Activated T-helper 2 cell treated with anti-CD3 and anti-CD28 coated beads, Interferon-gamma antibody, Interleukin-2, Interleukin-4, amounts not matched to agents 10 μg/mL and 5 μg/mL and 100 μg/mL, durations not matched to agents 14 hours and 24 hours and 36 hours (primary cell): ENCODE measurements at regions of chr2 and their contacts with region 1.

Region 1: GRCh38 chr2:203535078-203535783 is at the start of gene RAPH1:
- DNase-seq: peak; percentile 50
- H3K4me3 Mint-ChIP-seq: peak within 1 kb of the TSS; percentile 87
- H3K27ac Mint-ChIP-seq: peak within 1 kb of the TSS; percentile 78
- H3K4me1 Mint-ChIP-seq: peaks cover 22% of the 10 kb centered on the region
- H3K27me3 Mint-ChIP-seq: peaks cover 57% of the 10 kb centered on the region
- total RNA-seq, gene RAPH1: 2.8 and 4.6 TPM in 2 replicates

Region 2: DNA sequence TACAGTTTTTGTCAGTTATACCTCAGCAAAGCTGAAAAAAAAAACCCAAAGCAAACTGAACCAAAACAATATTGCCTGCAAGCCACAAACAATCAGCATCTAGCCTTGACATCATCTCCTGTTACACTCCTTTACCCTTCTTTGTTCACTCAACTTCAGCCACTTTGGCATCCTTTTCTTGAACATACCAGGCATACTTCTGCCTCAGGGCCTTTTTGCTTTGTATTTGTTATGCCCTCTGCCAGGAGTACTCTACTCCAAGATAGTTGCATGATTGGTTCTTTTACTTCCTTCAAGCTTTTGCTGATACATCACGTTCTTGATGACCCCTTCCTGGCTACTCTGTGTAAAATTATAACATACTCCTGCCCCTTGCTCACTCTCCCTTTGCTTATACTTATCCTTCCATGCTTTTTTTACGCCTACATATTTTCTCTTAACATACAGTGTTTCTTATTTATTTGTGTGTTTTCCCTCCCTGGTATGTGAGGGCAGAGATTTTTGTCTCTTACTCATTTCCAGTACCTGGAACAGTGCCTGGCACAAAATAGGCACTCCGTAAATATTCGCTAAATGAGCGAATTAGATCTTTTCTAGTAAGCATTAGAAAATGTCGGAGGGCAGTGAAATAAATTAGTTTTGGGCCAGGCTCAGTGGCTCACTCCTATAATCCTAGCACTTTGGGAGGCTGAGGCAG is 194.3 kb before region 1 on chr2:
- intact Hi-C with region 1: no loop called
- DNase-seq: no peak
- H3K4me3 Mint-ChIP-seq: no peak overlapping the region
- H3K27ac Mint-ChIP-seq: no peak overlapping the region
- H3K4me1 Mint-ChIP-seq: peaks cover 2% of the 10 kb centered on the region
- H3K27me3 Mint-ChIP-seq: no peaks in the 10 kb centered on the region

Region 3: GRCh38 chr2:203492965-203493364 is 42.3 kb before region 1 on chr2:
- intact Hi-C with region 1: loop called (anchors 5 kb)
- DNase-seq: no peak
- H3K4me3 Mint-ChIP-seq: no peak overlapping the region
- H3K27ac Mint-ChIP-seq: no peak overlapping the region
- H3K4me1 Mint-ChIP-seq: peaks cover 17% of the 10 kb centered on the region
- H3K27me3 Mint-ChIP-seq: no peaks in the 10 kb centered on the region

Region 4: DNA sequence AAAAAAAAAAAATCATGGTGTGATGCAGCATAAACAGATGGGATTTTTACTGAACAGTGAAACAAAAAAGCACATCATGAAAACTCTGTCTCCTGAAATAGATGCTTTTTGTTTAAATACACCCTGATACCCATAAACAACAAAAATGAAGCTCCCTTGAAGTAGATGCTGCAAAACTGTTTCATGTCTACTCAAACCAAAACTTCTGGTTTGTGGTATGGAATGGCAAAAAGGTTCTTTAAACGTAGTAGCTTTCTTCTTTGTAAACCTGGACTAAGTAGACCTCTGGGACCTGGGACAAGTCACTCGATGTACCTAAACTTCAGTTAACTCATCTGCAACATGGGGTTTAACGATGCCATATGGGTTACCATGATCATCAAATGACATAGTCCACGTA is 64.3 kb after region 1 on chr2:
- intact Hi-C with region 1: loop called (anchors 1 kb)
- DNase-seq: no peak
- H3K4me3 Mint-ChIP-seq: no peak overlapping the region
- H3K27ac Mint-ChIP-seq: no peak overlapping the region
- H3K4me1 Mint-ChIP-seq: peaks cover 35% of the 10 kb centered on the region
- H3K27me3 Mint-ChIP-seq: peaks cover 51% of the 10 kb centered on the region

Region 5: GRCh38 chr2:203673933-203674332 is 138.7 kb after region 1 on chr2:
- intact Hi-C with region 1: loop called (anchors 1 kb)
- DNase-seq: peak; percentile 46
- H3K4me3 Mint-ChIP-seq: peak overlapping the region; percentile 51
- H3K27ac Mint-ChIP-seq: peak overlapping the region; percentile 85
- H3K4me1 Mint-ChIP-seq: peaks cover 47% of the 10 kb centered on the region
- H3K27me3 Mint-ChIP-seq: no peaks in the 10 kb centered on the region

Region 6: DNA sequence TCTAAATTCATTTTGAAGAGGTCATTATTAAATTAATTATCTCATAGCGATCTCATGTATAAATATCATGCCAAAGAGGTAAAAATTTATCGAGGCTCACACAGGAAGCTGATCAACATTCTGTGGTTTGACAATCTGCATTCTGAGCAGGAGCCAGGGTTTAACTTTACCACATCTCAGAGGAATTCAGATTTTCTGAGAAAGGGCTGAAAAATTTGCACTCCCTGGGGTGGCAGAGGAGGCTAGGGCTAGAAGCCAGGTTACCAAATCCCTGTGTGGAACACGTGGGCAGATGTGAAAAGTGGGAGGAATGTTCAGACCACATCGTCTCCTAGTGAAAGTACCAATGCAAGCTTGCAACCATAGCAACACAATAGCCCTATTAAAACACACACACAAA is 268.8 kb after region 1 on chr2:
- intact Hi-C with region 1: loop called (anchors 5 kb)
- DNase-seq: peak; percentile 36
- H3K4me3 Mint-ChIP-seq: no peak overlapping the region
- H3K27ac Mint-ChIP-seq: peak overlapping the region; percentile 61
- H3K4me1 Mint-ChIP-seq: peaks cover 68% of the 10 kb centered on the region
- H3K27me3 Mint-ChIP-seq: no peaks in the 10 kb centered on the region